Mucosa of descending colon (tissue), 3 donors: ENCODE measurements at regions of chr18 and their contacts with region 1.

Region 1: GRCh38 chr18:31203096-31203793 is 40.6 kb upstream of the DSC1 start:
- DNase-seq: peak; percentile 61 to 70 (median 70)
- ATAC-seq: peak; percentile 15
- H3K4me3 ChIP-seq: no peak overlapping the region
- H3K4me1 ChIP-seq: peaks cover 13% of the 10 kb centered on the region
- CTCF ChIP-seq: no peak

Region 2: DNA sequence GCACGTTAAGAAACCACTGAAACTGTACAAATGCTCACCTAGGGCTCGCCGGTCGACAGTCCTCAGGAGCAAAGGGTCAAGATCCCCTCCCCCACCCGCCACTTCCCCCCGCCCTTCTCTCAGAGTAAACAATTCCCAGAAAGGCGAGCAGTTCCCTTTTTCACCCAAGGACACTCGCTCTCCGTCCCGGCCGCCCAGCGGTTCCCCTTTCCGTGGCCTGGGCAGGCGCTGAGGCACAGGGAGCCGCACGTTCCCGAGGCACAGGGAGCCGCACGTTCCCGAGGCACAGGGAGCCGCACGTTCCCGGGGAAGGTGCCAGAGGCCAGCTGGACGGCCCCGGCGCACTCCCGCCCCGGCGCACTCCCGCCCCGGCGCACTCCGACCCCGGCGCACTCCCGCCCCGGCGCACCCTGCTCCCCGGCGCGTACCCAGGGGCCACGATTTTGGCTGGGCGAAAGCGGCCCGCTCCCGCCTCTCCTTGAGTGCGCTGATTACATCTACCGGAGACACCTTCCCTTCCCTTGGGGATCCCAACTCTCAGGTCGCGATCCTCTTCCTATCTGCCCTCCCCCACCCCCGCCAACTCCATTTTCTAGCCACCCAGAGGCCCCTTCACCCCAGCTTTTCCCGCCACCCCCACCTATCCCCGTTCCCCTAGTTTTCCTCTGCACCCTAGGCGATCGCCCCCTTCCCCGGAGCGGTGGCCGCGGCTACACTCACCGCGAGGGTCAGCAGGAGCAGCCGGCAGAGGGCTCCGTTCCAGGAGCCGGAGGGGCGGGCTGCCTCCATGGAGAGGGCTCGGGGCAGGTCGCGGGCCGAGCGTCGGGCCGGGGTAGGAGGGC is 101.8 kb before region 1 on chr18:
- intact Hi-C with region 1: loop called in 1 of 2 experiments (anchors 5 kb)
- DNase-seq: peak; percentile 81 to 88 (median 83)
- ATAC-seq: peak; percentile 80
- H3K4me3 ChIP-seq: peak overlapping the region; percentile 66
- H3K4me1 ChIP-seq: peaks cover 11% of the 10 kb centered on the region
- CTCF ChIP-seq: no peak

Region 3: DNA sequence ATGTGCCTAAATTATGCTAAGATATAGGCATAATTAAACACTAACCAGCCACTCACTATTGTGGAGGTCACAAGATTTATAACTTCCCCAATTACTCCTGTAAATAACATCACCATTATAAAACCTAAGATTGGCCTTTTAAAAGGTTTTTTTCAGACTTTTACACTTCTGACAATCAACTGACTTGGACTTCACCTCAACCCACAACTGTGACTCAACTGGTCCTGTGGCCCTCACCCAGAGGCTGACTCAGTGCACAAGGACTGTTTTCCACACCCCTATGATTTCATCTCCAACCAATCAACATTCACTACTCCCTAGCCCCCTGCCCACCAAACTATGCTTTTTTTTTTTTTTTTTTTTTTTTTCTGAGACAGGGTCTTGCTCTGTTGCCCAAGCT is 400.1 kb after region 1 on chr18:
- intact Hi-C with region 1: no loop called
- DNase-seq: no peak
- ATAC-seq: peak; percentile 40
- H3K4me3 ChIP-seq: no peak overlapping the region
- H3K4me1 ChIP-seq: no peaks in the 10 kb centered on the region
- CTCF ChIP-seq: no peak